Activated naive CD4-positive, alpha-beta T cell treated with anti-CD3 and anti-CD28 coated beads for 36 hours (primary cell): ENCODE measurements at regions of chr10 and their contacts with region 1.

Region 1: GRCh38 chr10:22704471-22704911 is 9.9 kb downstream of the PIP4K2A start:
- DNase-seq: no peak
- H3K4me3 Mint-ChIP-seq: no peak overlapping the region
- H3K27ac Mint-ChIP-seq: peak overlapping the region; percentile 46
- H3K4me1 Mint-ChIP-seq: peaks cover 94% of the 10 kb centered on the region
- H3K27me3 Mint-ChIP-seq: no peaks in the 10 kb centered on the region

Region 2: DNA sequence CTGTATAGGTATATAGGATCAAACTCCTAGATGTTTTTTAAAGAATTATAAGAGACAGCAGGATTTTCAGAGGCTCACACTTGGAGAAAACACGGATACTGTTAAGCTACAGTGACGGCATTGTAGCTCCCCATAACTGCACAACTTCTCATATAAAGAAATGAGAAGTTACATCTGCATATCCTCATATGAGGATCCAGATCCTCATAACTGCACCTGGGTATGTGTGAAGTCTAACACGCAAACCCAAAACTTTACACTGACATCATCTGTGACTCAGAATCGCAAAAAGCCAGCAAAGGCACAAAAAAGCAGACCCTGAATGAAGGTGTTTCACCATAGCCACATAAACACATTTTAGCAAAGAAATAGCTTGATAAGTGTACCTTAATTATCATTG is 1841.5 kb before region 1 on chr10:
- CTCF ChIA-PET with region 1: no interaction called
- intact Hi-C with region 1: no loop called
- DNase-seq: no peak
- H3K4me3 Mint-ChIP-seq: no peak overlapping the region
- H3K27ac Mint-ChIP-seq: no peak overlapping the region
- H3K4me1 Mint-ChIP-seq: no peaks in the 10 kb centered on the region
- H3K27me3 Mint-ChIP-seq: peaks cover 2% of the 10 kb centered on the region

Region 3: GRCh38 chr10:22693371-22693784 is 11.1 kb before region 1 on chr10:
- CTCF ChIA-PET with region 1: no interaction called
- intact Hi-C with region 1: loop called (anchors 1 kb)
- DNase-seq: peak; percentile 42
- H3K4me3 Mint-ChIP-seq: peak overlapping the region; percentile 25
- H3K27ac Mint-ChIP-seq: peak overlapping the region; percentile 85
- H3K4me1 Mint-ChIP-seq: peaks cover 84% of the 10 kb centered on the region
- H3K27me3 Mint-ChIP-seq: no peaks in the 10 kb centered on the region

Region 4: DNA sequence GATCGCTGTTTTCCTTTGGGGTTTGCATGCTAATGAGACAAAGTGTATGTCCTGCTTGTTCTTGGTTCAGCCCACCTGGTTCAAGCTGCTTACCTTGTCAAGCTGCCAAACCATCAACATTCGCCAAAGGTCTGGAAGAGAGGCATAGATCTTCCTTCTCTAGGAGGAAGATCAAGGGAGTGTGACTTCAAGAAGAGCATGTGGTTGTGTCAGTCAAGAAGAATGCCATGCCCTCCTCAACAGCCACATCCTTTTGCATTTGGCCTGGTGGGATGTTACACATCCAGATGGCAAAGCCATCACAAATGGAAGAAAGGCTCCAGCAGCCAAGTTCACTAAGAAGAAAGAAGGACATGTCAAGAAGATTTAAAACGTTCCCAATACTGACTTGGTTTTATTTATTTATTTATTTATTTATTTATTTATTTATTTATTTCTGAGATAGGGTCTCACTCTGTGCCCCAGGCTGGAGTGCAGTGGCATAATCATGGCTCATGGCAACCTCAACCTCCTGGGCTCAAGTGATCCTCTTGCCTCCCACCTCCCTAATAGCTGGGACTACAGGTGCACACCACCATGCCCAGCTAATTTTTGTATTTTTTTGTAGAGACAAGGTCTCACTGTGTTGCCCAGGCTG is 15.0 kb after region 1 on chr10:
- CTCF ChIA-PET with region 1: no interaction called
- intact Hi-C with region 1: no loop called
- DNase-seq: no peak
- H3K4me3 Mint-ChIP-seq: no peak overlapping the region
- H3K27ac Mint-ChIP-seq: no peak overlapping the region
- H3K4me1 Mint-ChIP-seq: peaks cover 24% of the 10 kb centered on the region
- H3K27me3 Mint-ChIP-seq: no peaks in the 10 kb centered on the region